ENCODE measurements at regions of chr9 and their contacts with region 1.

Region 1: DNA sequence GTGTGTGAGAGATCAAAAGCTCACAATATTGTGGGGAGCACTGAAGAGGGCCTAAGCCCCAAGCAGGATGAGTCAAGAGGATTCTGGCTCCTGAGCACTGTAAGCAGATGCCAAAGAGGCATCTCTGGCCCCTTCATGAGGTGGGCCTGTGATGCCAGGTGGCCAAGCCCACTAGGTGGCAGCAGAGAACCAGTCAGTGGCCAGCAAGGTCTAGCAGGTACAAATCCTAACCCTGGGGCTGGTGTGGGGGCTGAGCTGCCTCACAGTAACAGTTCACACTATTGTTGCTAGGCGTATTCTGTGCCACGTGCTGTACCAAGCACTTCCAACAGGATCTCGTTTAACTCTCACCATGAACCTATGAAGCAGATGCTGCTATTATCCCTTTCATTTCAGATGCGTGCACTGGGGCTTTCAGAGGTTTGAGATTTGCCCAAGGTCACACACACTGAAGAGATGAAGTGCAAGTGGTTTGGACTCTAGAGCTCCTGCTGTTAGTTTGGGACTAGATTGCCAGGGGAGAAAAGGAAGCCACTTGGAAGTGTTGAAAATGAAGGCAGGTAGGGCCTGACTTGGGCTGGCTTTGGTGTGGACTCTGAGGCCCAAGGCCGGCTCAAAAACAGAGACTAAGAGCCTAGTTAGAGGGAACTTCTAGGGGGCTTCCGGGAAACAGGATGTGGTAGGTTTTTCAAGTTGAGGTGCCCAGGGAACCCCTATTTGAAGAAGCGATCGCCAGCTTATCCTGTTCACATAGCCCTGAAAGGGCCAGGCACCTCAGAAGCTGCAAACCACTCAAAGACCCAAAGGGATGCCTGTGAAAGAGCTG is 4.4 kb upstream of the MLANA start:
- DNase-seq: peak in 1 of 2 donors; percentile 79
- H3K4me3 ChIP-seq: no peak overlapping the region
- H3K27ac ChIP-seq: no peak overlapping the region
- H3K4me1 ChIP-seq: no peaks in the 10 kb centered on the region
- H3K27me3 ChIP-seq: no peaks in the 10 kb centered on the region
- CTCF ChIP-seq: peak; percentile 56 to 82 (median 77)

Region 2: GRCh38 chr9:5800969-5801738 is 85.2 kb before region 1 on chr9:
- intact Hi-C with region 1: loop called (anchors 10 kb)
- DNase-seq: no peak
- H3K4me3 ChIP-seq: no peak overlapping the region
- H3K27ac ChIP-seq: peak overlapping the region; percentile 26 to 36
- H3K4me1 ChIP-seq: no peaks in the 10 kb centered on the region
- H3K27me3 ChIP-seq: no peaks in the 10 kb centered on the region
- CTCF ChIP-seq: no peak

Region 3: DNA sequence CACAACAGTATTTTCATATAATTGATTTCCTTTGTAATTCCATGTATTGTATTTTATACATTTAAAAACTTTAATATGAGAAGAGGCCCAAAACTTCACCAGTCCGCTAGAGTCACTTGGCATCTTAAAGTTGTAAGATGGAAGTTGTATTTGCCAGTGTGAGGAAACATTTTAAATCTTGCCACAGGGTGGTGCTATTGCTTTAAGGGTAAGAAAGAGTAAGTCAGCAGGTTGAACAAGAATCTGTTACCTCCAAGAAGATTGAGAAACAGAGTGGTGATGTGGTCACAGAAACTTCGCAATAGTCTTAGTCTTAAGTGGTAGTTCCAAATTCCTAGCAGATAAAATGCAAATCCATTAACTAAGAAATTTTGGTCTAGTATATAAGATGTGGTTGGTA is 168.9 kb after region 1 on chr9:
- intact Hi-C with region 1: loop called (anchors 1 kb)
- DNase-seq: no peak
- H3K4me3 ChIP-seq: no peak overlapping the region
- H3K27ac ChIP-seq: no peak overlapping the region
- H3K4me1 ChIP-seq: no peaks in the 10 kb centered on the region
- H3K27me3 ChIP-seq: no peaks in the 10 kb centered on the region
- CTCF ChIP-seq: peak in 1 of 3 experiments; percentile 48

Region 4: GRCh38 chr9:6305954-6306563 is 419.7 kb after region 1 on chr9:
- intact Hi-C with region 1: loop called (anchors 5 kb)
- DNase-seq: no peak
- H3K4me3 ChIP-seq: no peak overlapping the region
- H3K27ac ChIP-seq: no peak overlapping the region
- H3K4me1 ChIP-seq: no peaks in the 10 kb centered on the region
- H3K27me3 ChIP-seq: no peaks in the 10 kb centered on the region
- CTCF ChIP-seq: peak; percentile 36 to 65 (median 52)

Measured in ascending aorta (tissue), 2 donors.